ENCODE measurements at regions of chr14 and their contacts with region 1.

Region 1: DNA sequence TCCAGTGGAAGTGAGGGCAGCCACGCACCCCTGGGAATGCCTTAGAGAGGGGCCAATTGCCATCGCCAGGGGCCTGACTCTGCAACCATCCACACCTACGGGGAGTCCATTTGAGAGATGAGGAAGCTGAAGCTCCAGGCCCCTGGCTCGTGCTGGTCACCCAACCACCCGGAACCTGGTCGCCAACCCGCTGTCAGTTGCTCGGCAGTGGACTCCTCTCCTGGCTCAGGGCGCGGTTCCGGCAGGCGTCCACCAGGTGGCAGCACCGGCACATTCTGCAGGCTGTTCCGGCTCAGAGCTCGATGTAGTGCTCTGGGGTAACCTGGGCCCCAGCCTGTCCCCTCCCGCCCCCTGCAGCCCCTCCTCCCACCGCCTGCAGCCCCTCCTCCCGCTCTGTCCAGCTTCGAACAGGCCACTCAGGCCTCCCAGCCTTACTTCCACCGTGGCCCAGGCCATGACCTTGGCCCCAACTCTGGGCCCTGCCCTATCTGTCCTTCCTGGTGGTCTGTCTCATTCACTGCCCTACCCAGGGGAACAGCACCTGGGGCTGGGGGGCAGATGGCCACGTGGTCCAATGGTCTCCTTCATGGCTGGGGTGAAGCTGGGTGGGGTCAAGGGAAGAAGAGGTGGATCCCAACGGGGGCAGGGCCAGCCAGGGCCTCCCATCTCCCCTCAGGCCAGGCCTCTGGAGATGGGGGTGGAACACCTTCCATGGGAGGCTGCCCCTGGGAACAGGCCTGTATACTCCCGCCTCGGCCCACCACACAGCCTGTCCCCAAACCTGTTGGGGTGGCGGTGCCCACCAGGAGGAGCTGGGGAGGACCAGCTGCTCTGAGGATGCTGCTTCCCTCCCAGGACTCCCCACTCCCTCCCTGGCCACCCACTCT is 15.7 kb downstream of the SIVA1 start:
- DNase-seq: peak; percentile 92
- H3K4me3 Mint-ChIP-seq: no peak overlapping the region
- H3K27ac Mint-ChIP-seq: peak overlapping the region; percentile 16
- H3K4me1 Mint-ChIP-seq: peaks cover 2% of the 10 kb centered on the region
- H3K27me3 Mint-ChIP-seq: no peaks in the 10 kb centered on the region

Region 2: DNA sequence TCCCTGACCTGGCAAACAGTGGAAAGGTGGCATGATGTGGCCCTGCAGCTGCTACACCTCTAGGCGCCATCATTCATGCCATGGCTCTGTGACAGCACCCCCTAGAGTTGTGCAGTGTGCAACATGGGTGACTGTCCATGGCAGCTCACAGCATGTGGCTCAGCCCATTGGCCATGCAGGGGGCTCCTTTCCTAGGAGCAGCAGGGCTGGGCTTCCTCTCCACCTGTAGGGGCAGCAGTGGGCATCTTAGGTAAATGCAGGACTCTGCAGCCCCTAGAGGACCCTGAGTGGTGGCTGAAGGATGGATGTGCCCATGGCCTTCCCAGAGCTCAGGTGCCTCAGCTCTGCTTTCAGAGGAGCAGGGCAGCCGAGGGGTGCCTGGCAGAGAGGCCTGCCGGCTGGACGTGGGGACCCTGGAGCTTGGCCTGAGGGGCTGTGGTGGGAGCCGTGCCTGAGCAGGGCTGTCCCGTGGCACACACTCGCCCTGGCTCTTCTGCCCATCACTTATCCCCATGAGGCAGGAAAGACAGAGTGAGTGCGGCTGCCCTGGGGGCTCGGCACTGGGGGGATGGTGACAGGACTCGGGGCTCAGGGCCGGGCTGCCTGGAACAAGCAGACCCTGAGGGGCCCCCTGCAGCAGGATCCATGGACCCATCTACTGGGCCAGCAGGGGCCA is 37.3 kb before region 1 on chr14:
- CTCF ChIA-PET with region 1: no interaction called
- POLR2A ChIA-PET with region 1: no interaction called
- DNase-seq: no peak
- H3K4me3 Mint-ChIP-seq: no peak overlapping the region
- H3K27ac Mint-ChIP-seq: no peak overlapping the region
- H3K4me1 Mint-ChIP-seq: no peaks in the 10 kb centered on the region
- H3K27me3 Mint-ChIP-seq: no peaks in the 10 kb centered on the region

Region 3: GRCh38 chr14:104742586-104743455 is 25.9 kb before region 1 on chr14:
- CTCF ChIA-PET with region 1: no interaction called
- POLR2A ChIA-PET with region 1: no interaction called
- DNase-seq: no peak
- H3K4me3 Mint-ChIP-seq: no peak overlapping the region
- H3K27ac Mint-ChIP-seq: no peak overlapping the region
- H3K4me1 Mint-ChIP-seq: peaks cover 16% of the 10 kb centered on the region
- H3K27me3 Mint-ChIP-seq: no peaks in the 10 kb centered on the region

Region 4: GRCh38 chr14:104826189-104826860 is 57.6 kb after region 1 on chr14:
- CTCF ChIA-PET with region 1: interaction called, 29 read pairs
- POLR2A ChIA-PET with region 1: interaction called, 19 read pairs
- DNase-seq: peak; percentile 95
- H3K4me3 Mint-ChIP-seq: peak overlapping the region; percentile 72
- H3K27ac Mint-ChIP-seq: no peak overlapping the region
- H3K4me1 Mint-ChIP-seq: peaks cover 23% of the 10 kb centered on the region
- H3K27me3 Mint-ChIP-seq: peaks cover 29% of the 10 kb centered on the region